ENCODE measurements at regions of chr19 and their contacts with region 1.

Region 1: DNA sequence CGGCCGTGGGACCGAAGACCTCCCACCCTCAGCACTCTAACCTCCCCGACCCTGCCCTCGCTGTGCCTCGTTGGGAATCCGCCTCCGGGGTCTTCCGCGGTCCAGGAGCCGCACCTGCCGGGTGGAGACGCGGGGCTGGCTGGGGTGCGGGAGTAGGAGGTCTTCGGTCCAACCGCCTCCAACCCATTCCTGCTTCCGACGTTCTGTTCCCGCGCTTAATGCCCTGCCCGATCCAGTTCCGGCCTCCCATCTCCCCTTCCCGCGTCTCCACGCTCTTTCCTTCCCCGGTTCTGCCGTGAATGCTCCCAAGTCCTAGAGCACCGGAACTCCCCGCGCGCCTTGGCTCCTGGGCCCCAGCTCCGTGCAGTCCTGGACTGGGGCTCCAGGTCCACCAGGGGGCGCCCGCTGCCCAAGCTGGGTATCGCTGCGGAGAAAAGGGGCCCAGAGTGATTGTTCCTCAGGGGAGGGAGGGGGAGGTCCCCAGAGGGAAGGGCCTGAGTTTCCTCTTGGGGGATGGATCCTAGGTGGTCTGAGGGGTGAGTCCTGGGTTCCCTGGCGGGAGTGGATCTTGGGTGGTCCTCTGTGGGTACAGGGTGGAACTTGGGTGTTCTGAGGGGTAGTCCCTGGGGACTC is 14.1 kb upstream of the TNFSF9 start:
- DNase-seq: peak; percentile 91
- ATAC-seq: peak; percentile 58
- H3K4me3 ChIP-seq: peak overlapping the region; percentile 31 to 74 (median 68)
- H3K4me3 Mint-ChIP-seq: peak overlapping the region; percentile 92
- H3K27ac ChIP-seq: peak overlapping the region in 1 of 2 donors; percentile 16
- H3K27ac Mint-ChIP-seq: peak overlapping the region; percentile 73
- H3K4me1 ChIP-seq: peaks cover 22 to 47% of the 10 kb centered on the region in 2 donors
- H3K4me1 Mint-ChIP-seq: peaks cover 38% of the 10 kb centered on the region
- H3K27me3 ChIP-seq: no peaks in the 10 kb centered on the region
- H3K27me3 Mint-ChIP-seq: no peaks in the 10 kb centered on the region
- CTCF ChIP-seq: peak; percentile 97

Region 2: GRCh38 chr19:6372594-6373095 is 144.1 kb before region 1 on chr19 and contains the start of gene ALKBH7:
- CTCF ChIA-PET with region 1: interaction called, 3 read pairs
- POLR2A ChIA-PET with region 1: no interaction called
- intact Hi-C with region 1: loop called (anchors 2 kb)
- DNase-seq: peak; percentile 99
- ATAC-seq: peak; percentile 73
- H3K4me3 ChIP-seq: peak within 1 kb of the TSS; percentile 45 to 96 (median 93)
- H3K4me3 Mint-ChIP-seq: peak within 1 kb of the TSS; percentile 91
- H3K27ac ChIP-seq: peak within 1 kb of the TSS; percentile 88 to 98
- H3K27ac Mint-ChIP-seq: peak within 1 kb of the TSS; percentile 91
- H3K4me1 ChIP-seq: peaks cover 9 to 12% of the 10 kb centered on the region in 2 donors
- H3K4me1 Mint-ChIP-seq: peaks cover 11% of the 10 kb centered on the region
- H3K27me3 ChIP-seq: no peaks in the 10 kb centered on the region
- H3K27me3 Mint-ChIP-seq: no peaks in the 10 kb centered on the region
- CTCF ChIP-seq: no peak
- total RNA-seq, gene ALKBH7: 62.7 and 67.0 TPM in 2 replicates

Region 3: GRCh38 chr19:6530386-6531161 is 13.8 kb after region 1 on chr19 and contains the start of gene TNFSF9:
- CTCF ChIA-PET with region 1: interaction called, 8 read pairs
- POLR2A ChIA-PET with region 1: interaction called, 14 read pairs
- intact Hi-C with region 1: loop called (anchors 1 kb)
- DNase-seq: peak; percentile 88
- ATAC-seq: peak; percentile 34
- H3K4me3 ChIP-seq: peak within 1 kb of the TSS in 4 of 5 experiments; percentile 50 to 66 (median 60)
- H3K4me3 Mint-ChIP-seq: peak within 1 kb of the TSS; percentile 87
- H3K27ac ChIP-seq: peak within 1 kb of the TSS in 1 of 2 donors; percentile 54
- H3K27ac Mint-ChIP-seq: peak within 1 kb of the TSS; percentile 82
- H3K4me1 ChIP-seq: peaks cover 42 to 64% of the 10 kb centered on the region in 2 donors
- H3K4me1 Mint-ChIP-seq: peaks cover 57% of the 10 kb centered on the region
- H3K27me3 ChIP-seq: peaks cover 0 to 17% (median 7%) of the 10 kb centered on the region in 4 experiments
- H3K27me3 Mint-ChIP-seq: peaks cover 11% of the 10 kb centered on the region
- CTCF ChIP-seq: no peak
- total RNA-seq, gene TNFSF9: 11.7 TPM in 2 replicates

Region 4: GRCh38 chr19:6602729-6603114 is 85.9 kb after region 1 on chr19:
- CTCF ChIA-PET with region 1: interaction called, 5 read pairs
- POLR2A ChIA-PET with region 1: interaction called, 14 read pairs
- intact Hi-C with region 1: no loop called
- DNase-seq: no peak
- ATAC-seq: no peak
- H3K4me3 ChIP-seq: no peak overlapping the region
- H3K4me3 Mint-ChIP-seq: peak overlapping the region; percentile 23
- H3K27ac ChIP-seq: no peak overlapping the region
- H3K27ac Mint-ChIP-seq: peak overlapping the region; percentile 63
- H3K4me1 ChIP-seq: peaks cover 0 to 35% of the 10 kb centered on the region in 2 donors
- H3K4me1 Mint-ChIP-seq: peaks cover 35% of the 10 kb centered on the region
- H3K27me3 ChIP-seq: no peaks in the 10 kb centered on the region
- H3K27me3 Mint-ChIP-seq: peaks cover 3% of the 10 kb centered on the region
- CTCF ChIP-seq: no peak

Region 5: GRCh38 chr19:6718741-6719539 is 202.2 kb after region 1 on chr19:
- CTCF ChIA-PET with region 1: no interaction called
- POLR2A ChIA-PET with region 1: interaction called, 11 read pairs
- intact Hi-C with region 1: no loop called
- DNase-seq: peak; percentile 44
- ATAC-seq: peak; percentile 19
- H3K4me3 ChIP-seq: no peak overlapping the region
- H3K4me3 Mint-ChIP-seq: no peak overlapping the region
- H3K27ac ChIP-seq: no peak overlapping the region
- H3K27ac Mint-ChIP-seq: no peak overlapping the region
- H3K4me1 ChIP-seq: peaks cover 32 to 35% of the 10 kb centered on the region in 2 donors
- H3K4me1 Mint-ChIP-seq: peaks cover 36% of the 10 kb centered on the region
- H3K27me3 ChIP-seq: no peaks in the 10 kb centered on the region
- H3K27me3 Mint-ChIP-seq: no peaks in the 10 kb centered on the region
- CTCF ChIP-seq: no peak

Region 6: DNA sequence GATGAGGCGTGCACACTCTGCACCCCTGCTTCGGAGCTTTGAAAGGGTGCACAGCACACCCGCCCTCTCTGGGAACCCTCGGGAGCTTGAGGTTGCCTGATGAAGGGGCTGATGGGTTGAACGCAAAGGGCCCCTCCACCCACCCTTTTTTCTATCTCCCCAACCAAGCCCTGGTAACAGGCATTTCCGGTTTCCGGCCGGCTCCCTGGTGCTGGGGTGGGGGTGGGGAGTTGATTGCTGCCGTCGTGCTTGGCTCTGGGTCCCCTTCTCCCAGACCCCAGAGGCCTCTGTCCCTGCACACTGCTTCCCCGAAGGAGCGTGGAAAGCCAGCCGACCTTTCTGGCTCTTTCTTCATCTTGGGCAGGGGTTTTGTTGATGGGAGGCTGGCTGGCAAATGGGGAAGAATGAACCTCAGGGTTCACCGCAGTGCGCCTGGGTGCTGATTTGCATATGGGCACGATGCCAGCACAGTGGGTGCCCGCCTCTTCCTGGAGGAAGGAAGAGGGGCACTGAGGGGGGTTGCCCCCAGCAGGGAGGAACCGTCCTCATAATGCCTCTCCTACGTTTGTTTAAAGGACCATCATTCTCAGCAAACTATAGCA is 284.8 kb after region 1 on chr19:
- CTCF ChIA-PET with region 1: interaction called, 10 read pairs
- POLR2A ChIA-PET with region 1: interaction called, 8 read pairs
- intact Hi-C with region 1: no loop called
- DNase-seq: peak; percentile 95
- ATAC-seq: peak; percentile 74
- H3K4me3 ChIP-seq: peak overlapping the region; percentile 32 to 68 (median 61)
- H3K4me3 Mint-ChIP-seq: peak overlapping the region; percentile 95
- H3K27ac ChIP-seq: peak overlapping the region; percentile 75 to 83
- H3K27ac Mint-ChIP-seq: peak overlapping the region; percentile 98
- H3K4me1 ChIP-seq: peaks cover 44 to 83% of the 10 kb centered on the region in 2 donors
- H3K4me1 Mint-ChIP-seq: peaks cover 68% of the 10 kb centered on the region
- H3K27me3 ChIP-seq: no peaks in the 10 kb centered on the region
- H3K27me3 Mint-ChIP-seq: no peaks in the 10 kb centered on the region
- CTCF ChIP-seq: no peak